ENCODE measurements at regions of chr11 and their contacts with region 1.

Region 1: DNA sequence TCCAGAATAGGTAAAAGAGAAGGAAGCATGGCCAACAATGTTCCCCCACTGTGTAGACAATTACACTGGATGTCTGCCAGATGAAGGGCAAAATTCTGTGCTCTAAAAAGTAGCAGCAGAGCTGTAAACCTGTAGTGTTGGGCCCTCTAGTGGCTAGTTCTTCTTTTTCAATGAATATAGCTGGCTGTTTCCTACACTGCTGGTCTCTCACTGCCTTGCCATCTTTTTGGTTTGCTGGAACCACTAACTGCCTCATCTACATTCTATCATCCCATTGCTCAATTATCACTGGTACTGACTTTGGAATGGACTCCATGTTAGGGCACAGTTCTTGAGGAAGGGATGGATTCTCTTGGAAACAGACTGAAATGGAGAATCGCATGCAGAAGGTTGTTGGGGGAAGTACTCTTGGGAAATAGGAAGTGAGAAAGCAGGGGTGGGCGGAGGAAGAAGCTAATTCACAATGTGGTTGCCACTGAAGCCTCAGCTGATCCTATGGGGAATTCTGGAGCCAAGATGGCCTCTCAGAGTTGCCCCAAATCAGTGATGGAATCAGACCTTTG is 17.9 kb downstream of the KCNE3 start:
- DNase-seq: peak; percentile 23
- H3K4me3 ChIP-seq: no peak overlapping the region
- CTCF ChIP-seq: peak; percentile 68

Region 2: GRCh38 chr11:73797457-73797856 is 652.0 kb before region 1 on chr11:
- CTCF ChIA-PET with region 1: no interaction called
- POLR2A ChIA-PET with region 1: no interaction called
- DNase-seq: no peak
- H3K4me3 ChIP-seq: no peak overlapping the region
- CTCF ChIP-seq: no peak

Region 3: DNA sequence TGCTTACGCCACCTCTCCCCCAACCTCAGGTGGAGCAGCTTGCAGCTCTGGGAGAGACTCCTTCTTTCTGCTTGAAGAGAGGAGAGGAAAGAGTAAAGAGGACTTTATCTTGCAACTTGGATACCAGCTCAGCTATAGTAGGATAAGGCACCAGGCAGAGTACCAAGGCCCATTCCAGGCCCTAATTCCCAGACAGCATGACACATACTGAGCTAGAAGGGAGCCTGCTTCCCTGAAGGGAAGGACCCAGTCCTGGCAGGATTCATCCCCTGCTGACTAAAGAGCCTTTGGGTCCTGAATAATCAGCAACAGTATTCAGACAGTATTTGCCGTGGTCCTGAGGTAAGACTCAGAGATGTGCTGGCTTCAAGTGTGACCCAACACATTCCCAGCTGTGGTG is 236.9 kb before region 1 on chr11:
- CTCF ChIA-PET with region 1: no interaction called
- POLR2A ChIA-PET with region 1: no interaction called
- DNase-seq: no peak
- H3K4me3 ChIP-seq: no peak overlapping the region
- CTCF ChIP-seq: no peak

Region 4: DNA sequence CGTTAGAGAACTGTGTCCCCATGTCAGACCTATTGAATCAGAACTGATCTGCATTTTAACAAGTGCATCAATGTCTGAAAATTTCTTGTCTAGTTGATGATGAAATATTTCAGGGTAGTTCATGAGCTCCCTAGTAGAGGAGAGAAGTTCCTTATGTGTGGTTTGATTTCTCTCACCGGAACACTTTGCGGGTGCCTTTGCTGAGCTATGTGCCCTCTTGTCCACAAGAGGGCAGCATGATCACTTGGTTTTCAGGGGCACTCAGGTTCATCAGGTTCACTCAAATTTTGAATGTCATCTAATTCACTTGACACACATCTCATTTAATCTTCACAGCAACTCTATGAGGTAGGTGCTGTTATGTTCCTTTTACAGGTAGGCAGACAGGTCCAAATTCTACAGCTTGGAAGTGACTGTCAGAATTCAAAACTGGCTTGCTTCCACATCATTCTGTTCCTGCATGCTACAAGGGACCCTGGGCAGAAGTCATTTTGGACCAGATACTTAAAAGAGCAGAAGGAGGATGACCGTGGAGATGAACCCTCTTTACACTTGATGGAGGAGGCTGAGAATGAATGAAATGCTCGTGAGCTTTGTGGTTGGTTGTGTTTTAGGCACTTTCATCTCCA is 193.6 kb before region 1 on chr11:
- CTCF ChIA-PET with region 1: interaction called, 674 read pairs
- POLR2A ChIA-PET with region 1: no interaction called
- DNase-seq: no peak
- H3K4me3 ChIP-seq: no peak overlapping the region
- CTCF ChIP-seq: peak; percentile 79

Region 5: DNA sequence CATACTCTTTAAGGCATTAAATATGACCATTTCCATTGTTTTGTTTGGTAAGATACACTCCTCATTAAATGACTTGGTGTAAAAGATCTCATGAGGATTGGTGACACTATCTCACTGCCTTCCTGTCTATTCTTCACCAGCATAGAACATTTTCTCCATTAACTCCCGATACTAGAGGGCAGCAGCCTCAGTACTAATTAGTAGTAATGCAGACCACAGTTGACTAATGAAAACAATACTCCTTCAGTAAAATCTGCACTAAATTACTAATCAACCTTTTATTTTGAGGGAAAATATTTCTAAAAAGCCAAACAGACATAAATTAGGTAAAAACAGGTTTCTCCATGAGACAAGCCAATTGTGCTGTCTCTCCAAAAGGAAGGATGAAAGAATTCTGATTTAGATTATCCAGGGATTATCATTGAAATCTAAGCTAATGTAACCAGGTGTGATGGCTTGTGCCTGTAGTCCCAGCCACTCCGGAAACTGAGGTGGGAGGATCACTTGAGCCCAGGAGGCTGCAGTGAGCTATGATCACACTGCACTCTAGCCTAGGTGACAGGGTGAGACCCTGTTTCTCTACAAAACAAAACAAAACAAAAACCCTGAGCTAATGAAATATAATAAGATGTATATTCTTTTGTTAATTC is 60.6 kb before region 1 on chr11:
- CTCF ChIA-PET with region 1: interaction called, 128 read pairs
- POLR2A ChIA-PET with region 1: no interaction called
- DNase-seq: no peak
- H3K4me3 ChIP-seq: no peak overlapping the region
- CTCF ChIP-seq: peak; percentile 65

Region 6: DNA sequence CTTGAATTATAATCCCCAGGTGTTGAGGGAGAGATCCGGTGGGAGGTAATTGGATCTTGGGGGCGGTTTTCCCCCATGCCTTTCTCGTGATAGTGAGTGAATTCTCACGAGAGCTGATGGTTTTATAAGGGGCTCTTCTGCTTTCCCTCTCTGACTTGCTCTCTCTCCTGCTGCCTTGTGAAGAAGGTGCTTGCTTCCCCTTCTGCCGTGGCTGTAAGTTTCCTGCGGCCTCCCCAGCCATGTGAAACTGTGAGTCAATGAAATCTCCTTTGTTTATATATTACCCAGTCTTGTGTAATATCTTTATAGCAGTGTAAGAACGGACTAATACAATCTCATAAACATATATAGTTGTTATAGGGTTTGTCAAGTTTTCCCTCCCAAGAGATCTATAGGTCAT is 14.9 kb before region 1 on chr11:
- CTCF ChIA-PET with region 1: interaction called, 31 read pairs
- POLR2A ChIA-PET with region 1: no interaction called
- DNase-seq: no peak
- H3K4me3 ChIP-seq: no peak overlapping the region
- CTCF ChIP-seq: no peak

Region 7: DNA sequence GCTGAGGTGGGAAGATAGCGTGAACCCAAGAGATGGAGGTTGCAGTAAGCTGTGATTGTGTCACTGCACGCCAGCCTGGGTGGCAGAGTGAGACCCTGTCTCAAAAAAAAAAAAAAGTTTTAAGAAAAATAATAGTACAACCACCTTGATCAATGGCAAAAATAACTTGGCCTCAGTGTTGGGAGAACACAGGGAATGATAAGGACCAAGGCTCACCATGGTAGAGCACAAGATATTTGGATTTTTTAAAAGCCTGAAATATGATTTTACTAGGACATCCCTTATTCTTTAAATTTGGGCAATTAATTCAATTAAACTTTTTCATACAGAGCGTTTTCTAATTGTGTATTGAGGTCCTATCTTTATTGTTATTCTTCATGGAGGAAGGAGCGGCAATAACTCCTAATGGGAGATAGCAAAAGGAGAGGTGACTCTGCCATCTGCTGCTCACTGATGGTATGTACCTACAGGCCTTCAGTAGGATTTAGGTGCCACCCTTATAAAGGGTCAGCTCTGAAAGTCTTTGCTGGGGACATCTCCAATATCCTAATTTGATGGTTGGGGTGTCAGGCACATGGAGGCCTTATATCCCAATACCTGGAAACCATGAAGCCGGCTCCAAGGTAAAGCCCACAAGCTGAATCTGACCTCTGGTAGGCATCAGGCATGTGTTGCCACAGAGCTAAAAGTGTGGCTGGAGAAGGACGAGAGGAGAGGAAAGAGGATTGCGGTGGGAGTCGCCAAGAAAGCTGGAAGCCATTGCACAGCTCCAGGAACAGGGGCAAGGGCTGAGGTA is 121.0 kb after region 1 on chr11:
- CTCF ChIA-PET with region 1: interaction called, 276 read pairs
- POLR2A ChIA-PET with region 1: interaction called, 3 read pairs
- DNase-seq: no peak
- H3K4me3 ChIP-seq: no peak overlapping the region
- CTCF ChIP-seq: peak; percentile 62

Region 8: DNA sequence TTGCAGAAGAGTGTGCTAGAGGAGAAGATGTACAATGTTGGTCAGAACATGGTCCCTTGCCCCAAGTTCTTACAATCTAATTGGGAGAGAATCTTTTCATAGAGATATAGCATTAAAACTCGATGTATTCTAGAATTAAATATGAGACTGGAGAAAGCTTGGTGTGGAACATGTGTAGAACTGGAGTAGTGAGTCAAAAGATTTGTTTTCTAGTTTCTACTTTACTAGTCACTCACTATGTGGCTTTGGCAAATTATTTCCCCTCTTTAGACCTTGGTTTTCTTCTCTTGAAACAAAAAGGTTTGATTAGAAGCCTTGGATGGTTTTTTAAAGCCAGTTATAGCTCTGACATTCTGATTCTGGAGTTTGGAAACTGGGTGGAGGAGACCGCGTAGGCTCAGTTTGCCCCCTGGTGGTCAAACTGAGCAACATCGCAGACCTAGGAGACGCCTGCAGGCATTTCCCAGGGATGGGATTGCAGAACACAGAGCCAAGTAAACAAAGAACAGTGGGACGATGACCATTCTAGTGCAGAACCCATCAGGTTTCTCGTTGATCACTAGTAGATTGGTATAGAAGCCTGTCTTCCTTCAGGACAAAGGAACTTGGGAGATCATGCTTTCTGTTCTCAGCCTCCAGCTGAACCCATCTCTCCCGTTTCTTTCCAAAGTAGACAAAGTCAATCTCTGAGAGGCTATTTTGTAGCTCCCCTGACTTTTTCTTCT is 290.3 kb after region 1 on chr11:
- CTCF ChIA-PET with region 1: interaction called, 54 read pairs
- POLR2A ChIA-PET with region 1: no interaction called
- DNase-seq: no peak
- H3K4me3 ChIP-seq: no peak overlapping the region
- CTCF ChIP-seq: peak; percentile 78

Measured in AG04449 (cell line).